ENCODE measurements at regions of chr11 and their contacts with region 1.

Region 1: GRCh38 chr11:6746086-6746618 is 25.6 kb downstream of the OR2AG2 start:
- DNase-seq: peak; percentile 56 to 64 (median 61)
- H3K4me3 ChIP-seq: peak overlapping the region; percentile 60 to 75
- H3K4me3 Mint-ChIP-seq: no peak overlapping the region
- H3K27ac ChIP-seq: peak overlapping the region; percentile 79
- H3K27ac Mint-ChIP-seq: no peak overlapping the region
- H3K4me1 ChIP-seq: peaks cover 49% of the 10 kb centered on the region
- H3K4me1 Mint-ChIP-seq: peaks cover 31 to 39% (median 34%) of the 10 kb centered on the region in 4 donors
- H3K27me3 ChIP-seq: no peaks in the 10 kb centered on the region
- H3K27me3 Mint-ChIP-seq: no peaks in the 10 kb centered on the region

Region 2: GRCh38 chr11:6655020-6655789 is 90.9 kb before region 1 on chr11:
- CTCF ChIA-PET with region 1: no interaction called
- POLR2A ChIA-PET with region 1: no interaction called
- intact Hi-C with region 1: no loop called
- DNase-seq: peak in 1 of 5 donors; percentile 50
- H3K4me3 ChIP-seq: peak overlapping the region in 1 of 2 donors; percentile 3
- H3K4me3 Mint-ChIP-seq: no peak overlapping the region
- H3K27ac ChIP-seq: no peak overlapping the region
- H3K27ac Mint-ChIP-seq: no peak overlapping the region
- H3K4me1 ChIP-seq: peaks cover 25% of the 10 kb centered on the region
- H3K4me1 Mint-ChIP-seq: peaks cover 0 to 8% (median 1%) of the 10 kb centered on the region in 4 donors
- H3K27me3 ChIP-seq: peaks cover 7% of the 10 kb centered on the region
- H3K27me3 Mint-ChIP-seq: peaks cover 0 to 2% of the 10 kb centered on the region in 2 donors

Region 3: DNA sequence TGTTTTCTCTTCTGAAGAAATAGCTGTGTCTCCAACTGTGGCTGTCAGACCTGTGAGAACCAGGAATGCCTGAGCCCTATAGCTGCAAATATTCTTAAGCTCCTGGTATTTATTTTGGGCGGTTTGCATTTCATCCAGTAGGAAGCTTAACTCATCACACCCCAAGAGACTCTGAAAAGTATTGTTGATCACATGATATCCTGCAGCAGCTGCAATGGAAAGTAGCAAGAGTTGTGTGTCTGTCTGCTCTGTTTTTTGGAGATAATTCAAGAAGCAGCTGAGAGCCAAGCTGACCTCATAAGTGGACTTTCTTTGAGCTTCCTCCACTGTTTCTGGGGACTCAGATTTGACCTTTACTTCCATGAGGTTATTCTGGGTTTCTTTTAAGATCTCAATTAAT is 26.6 kb before region 1 on chr11:
- CTCF ChIA-PET with region 1: interaction called, 80 read pairs
- POLR2A ChIA-PET with region 1: interaction called, 16 read pairs
- intact Hi-C with region 1: no loop called
- DNase-seq: no peak
- H3K4me3 ChIP-seq: no peak overlapping the region
- H3K4me3 Mint-ChIP-seq: peak overlapping the region in 2 of 8 donors; percentile 27 to 31
- H3K27ac ChIP-seq: no peak overlapping the region
- H3K27ac Mint-ChIP-seq: peak overlapping the region; percentile 0 to 86 (median 59)
- H3K4me1 ChIP-seq: peaks cover 75% of the 10 kb centered on the region
- H3K4me1 Mint-ChIP-seq: peaks cover 56 to 91% (median 77%) of the 10 kb centered on the region in 4 donors
- H3K27me3 ChIP-seq: no peaks in the 10 kb centered on the region
- H3K27me3 Mint-ChIP-seq: no peaks in the 10 kb centered on the region

Region 4: GRCh38 chr11:6727971-6728760 is 18.0 kb before region 1 on chr11:
- CTCF ChIA-PET with region 1: interaction called, 730 read pairs
- POLR2A ChIA-PET with region 1: interaction called, 82 read pairs
- intact Hi-C with region 1: loop called (anchors 1 kb)
- DNase-seq: no peak
- H3K4me3 ChIP-seq: no peak overlapping the region
- H3K4me3 Mint-ChIP-seq: peak overlapping the region in 4 of 8 donors; percentile 38 to 57 (median 43)
- H3K27ac ChIP-seq: no peak overlapping the region
- H3K27ac Mint-ChIP-seq: peak overlapping the region; percentile 33 to 93 (median 74)
- H3K4me1 ChIP-seq: peaks cover 70% of the 10 kb centered on the region
- H3K4me1 Mint-ChIP-seq: peaks cover 50 to 93% (median 71%) of the 10 kb centered on the region in 4 donors
- H3K27me3 ChIP-seq: no peaks in the 10 kb centered on the region
- H3K27me3 Mint-ChIP-seq: no peaks in the 10 kb centered on the region

Region 5: GRCh38 chr11:6799402-6799801 is 53.2 kb after region 1 on chr11 and contains the start of gene OR6A2:
- CTCF ChIA-PET with region 1: no interaction called
- POLR2A ChIA-PET with region 1: no interaction called
- intact Hi-C with region 1: no loop called
- DNase-seq: no peak
- H3K4me3 ChIP-seq: no peak within 1 kb of the TSS
- H3K4me3 Mint-ChIP-seq: no peak within 1 kb of the TSS
- H3K27ac ChIP-seq: no peak within 1 kb of the TSS
- H3K27ac Mint-ChIP-seq: no peak within 1 kb of the TSS
- H3K4me1 ChIP-seq: no peaks in the 10 kb centered on the region
- H3K4me1 Mint-ChIP-seq: no peaks in the 10 kb centered on the region
- H3K27me3 ChIP-seq: no peaks in the 10 kb centered on the region
- H3K27me3 Mint-ChIP-seq: peaks cover 0 to 3% of the 10 kb centered on the region in 2 donors
- total RNA-seq, gene OR6A2: not detected